Activated CD4-positive, alpha-beta T cell treated with anti-CD3 and anti-CD28 coated beads, Interleukin-2, amount 10 ng/mL, durations not matched to agents 7 days and 5 days (primary cell): ENCODE measurements at regions of chr11 and their contacts with region 1.

Region 1: GRCh38 chr11:3841426-3842350 is 929 bp upstream of the RHOG start:
- DNase-seq: peak; percentile 93
- H3K4me3 Mint-ChIP-seq: peak overlapping the region; percentile 94
- H3K27ac Mint-ChIP-seq: peak overlapping the region; percentile 99
- H3K4me1 Mint-ChIP-seq: peaks cover 52% of the 10 kb centered on the region
- H3K27me3 Mint-ChIP-seq: no peaks in the 10 kb centered on the region

Region 2: GRCh38 chr11:3775736-3776406 is 65.8 kb before region 1 on chr11:
- CTCF ChIA-PET with region 1: no interaction called
- POLR2A ChIA-PET with region 1: no interaction called
- DNase-seq: no peak
- H3K4me3 Mint-ChIP-seq: no peak overlapping the region
- H3K27ac Mint-ChIP-seq: no peak overlapping the region
- H3K4me1 Mint-ChIP-seq: peaks cover 2% of the 10 kb centered on the region
- H3K27me3 Mint-ChIP-seq: no peaks in the 10 kb centered on the region

Region 3: GRCh38 chr11:4065601-4066377 is 224.1 kb after region 1 on chr11:
- CTCF ChIA-PET with region 1: interaction called, 12 read pairs
- POLR2A ChIA-PET with region 1: no interaction called
- DNase-seq: no peak
- H3K4me3 Mint-ChIP-seq: no peak overlapping the region
- H3K27ac Mint-ChIP-seq: peak overlapping the region; percentile 32
- H3K4me1 Mint-ChIP-seq: peaks cover 47% of the 10 kb centered on the region
- H3K27me3 Mint-ChIP-seq: no peaks in the 10 kb centered on the region